AG04450 (cell line): ENCODE measurements at regions of chr11 and their contacts with region 1.

Region 1: DNA sequence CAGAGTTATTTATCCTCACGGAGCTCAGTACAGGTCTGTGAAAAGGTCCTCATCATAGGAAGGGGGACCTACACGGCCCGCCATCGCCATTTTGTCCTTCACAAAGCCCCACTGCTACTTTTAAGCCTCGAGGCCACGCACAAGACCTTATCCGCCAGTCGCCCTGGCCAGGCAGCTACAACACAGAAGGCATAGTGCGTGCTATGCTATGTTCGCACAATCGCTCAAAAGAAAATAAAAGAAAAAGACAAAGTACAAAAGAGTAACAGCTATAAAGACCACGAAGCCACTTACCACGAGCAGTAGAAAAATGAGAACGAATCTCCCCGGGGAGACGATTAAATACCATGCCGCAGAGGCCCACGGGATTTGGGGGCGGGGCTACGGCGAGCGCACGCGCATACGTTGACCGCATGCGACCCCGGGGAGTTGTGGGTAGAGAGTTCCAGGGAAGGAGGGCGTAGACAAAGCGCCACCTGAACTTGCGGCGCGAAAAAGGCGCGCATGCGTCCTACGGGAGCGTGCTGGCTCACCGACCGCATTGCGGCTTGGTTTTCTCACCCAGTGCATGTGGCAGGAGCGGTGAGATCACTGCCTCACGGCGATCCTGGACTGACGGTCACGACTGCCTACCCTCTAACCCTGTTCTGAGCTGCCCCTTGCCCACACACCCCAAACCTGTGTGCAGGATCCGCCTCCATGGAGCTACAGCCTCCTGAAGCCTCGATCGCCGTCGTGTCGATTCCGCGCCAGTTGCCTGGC is 16.4 kb upstream of the WDR74 start:
- DNase-seq: peak; percentile 98
- H3K4me3 ChIP-seq: peak overlapping the region; percentile 96
- H3K27ac ChIP-seq: peak overlapping the region; percentile 91
- H3K27me3 ChIP-seq: no peaks in the 10 kb centered on the region
- CTCF ChIP-seq: no peak

Region 2: DNA sequence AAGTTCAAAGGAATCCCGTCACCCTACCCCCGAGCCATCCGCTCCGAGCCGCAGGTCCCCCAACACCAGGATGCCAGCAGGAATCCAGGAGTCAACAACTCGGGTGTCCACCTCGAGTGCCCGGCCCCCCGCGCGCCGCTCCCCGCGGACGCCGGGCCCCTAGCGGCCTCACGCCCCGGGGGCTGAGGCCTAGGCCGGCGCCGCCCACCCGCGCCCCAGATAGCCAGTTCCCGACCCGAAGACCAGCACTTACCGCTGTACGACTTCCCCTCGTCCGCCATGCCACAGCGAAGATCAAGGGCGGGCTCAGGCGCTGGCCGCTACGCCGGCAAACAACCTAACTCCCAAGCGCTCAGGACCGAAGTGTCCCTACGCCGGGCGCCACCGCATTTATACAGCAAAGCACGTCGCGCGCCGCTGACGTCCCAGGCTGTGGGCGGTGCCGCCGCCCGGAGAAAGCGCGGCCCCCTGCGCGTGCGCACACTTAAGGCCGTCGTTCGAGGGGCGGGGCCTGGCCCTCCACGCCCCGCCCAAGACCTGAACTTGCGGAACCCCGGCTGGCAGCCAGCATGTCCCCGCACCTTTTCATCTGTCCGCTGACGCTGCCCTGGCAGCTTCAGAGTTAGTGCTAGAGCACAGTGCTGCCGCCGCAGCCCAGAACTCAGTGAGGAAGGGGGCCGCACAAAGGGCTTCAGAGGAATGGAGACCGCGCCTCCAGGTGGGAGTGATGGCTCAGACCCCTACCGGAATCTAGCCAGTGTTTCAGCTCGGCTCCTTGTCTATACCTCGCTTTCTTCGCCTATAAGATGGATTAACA is 50.5 kb before region 1 on chr11 and contains the start of gene NXF1:
- CTCF ChIA-PET with region 1: no interaction called
- POLR2A ChIA-PET with region 1: no interaction called
- DNase-seq: peak; percentile 87
- H3K4me3 ChIP-seq: peak within 1 kb of the TSS; percentile 96
- H3K27ac ChIP-seq: peak within 1 kb of the TSS; percentile 81
- H3K27me3 ChIP-seq: no peaks in the 10 kb centered on the region
- CTCF ChIP-seq: peak; percentile 14; the same call in 1 of the 2 replicates
- polyA plus RNA-seq, gene NXF1: 48.9 and 66.1 TPM in 2 replicates

Region 3: DNA sequence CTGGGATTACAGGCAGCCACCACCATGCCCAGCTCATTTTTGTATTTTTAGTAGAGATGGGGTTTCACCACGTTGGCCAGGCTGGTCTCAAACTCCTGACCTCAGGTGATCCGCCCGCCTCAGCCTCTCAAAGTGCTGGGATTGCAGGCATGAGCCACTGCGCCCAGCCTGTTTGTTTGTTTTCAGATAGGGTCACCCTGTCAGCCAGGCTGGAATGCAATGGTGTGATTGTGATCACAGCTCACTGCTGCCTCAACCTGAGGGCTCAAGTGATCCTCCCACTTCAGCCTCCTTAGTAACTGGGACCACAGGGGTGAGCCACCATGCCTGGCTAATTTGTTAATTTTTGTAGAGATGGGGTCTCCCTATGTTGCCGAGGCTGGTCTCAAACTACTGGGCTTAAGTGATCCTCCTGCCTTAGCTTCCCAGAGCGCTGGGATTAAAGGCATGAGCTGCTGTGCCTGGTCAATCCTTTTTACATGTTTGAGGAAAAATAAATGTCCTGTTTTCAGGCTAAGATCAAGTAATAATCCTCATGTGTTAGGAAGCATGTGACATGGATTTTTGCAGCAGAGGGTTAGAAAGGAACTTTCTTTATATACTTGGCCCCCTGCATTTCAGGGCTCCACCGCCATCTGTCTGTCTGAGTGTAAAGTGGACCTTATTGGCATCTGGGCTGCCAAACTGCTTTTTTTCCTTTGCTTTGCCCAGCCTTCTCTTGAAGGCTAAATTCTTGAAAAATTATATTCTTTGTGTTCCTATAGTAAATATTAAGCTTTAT is 20.1 kb after region 1 on chr11:
- CTCF ChIA-PET with region 1: interaction called, 6 read pairs
- POLR2A ChIA-PET with region 1: interaction called, 33 read pairs
- DNase-seq: no peak
- H3K4me3 ChIP-seq: no peak overlapping the region
- H3K27ac ChIP-seq: peak overlapping the region; percentile 11
- H3K27me3 ChIP-seq: no peaks in the 10 kb centered on the region
- CTCF ChIP-seq: 0 out of 2 replicates have a peak, but pooled peaks have one; percentile 7

Region 4: GRCh38 chr11:62999649-63000048 is 143.9 kb after region 1 on chr11:
- CTCF ChIA-PET with region 1: no interaction called
- POLR2A ChIA-PET with region 1: no interaction called
- DNase-seq: no peak
- H3K4me3 ChIP-seq: no peak overlapping the region
- H3K27ac ChIP-seq: no peak overlapping the region
- H3K27me3 ChIP-seq: peaks cover 3% of the 10 kb centered on the region
- CTCF ChIP-seq: no peak